ENCODE measurements at regions of chrX and their contacts with region 1.

Region 1: DNA sequence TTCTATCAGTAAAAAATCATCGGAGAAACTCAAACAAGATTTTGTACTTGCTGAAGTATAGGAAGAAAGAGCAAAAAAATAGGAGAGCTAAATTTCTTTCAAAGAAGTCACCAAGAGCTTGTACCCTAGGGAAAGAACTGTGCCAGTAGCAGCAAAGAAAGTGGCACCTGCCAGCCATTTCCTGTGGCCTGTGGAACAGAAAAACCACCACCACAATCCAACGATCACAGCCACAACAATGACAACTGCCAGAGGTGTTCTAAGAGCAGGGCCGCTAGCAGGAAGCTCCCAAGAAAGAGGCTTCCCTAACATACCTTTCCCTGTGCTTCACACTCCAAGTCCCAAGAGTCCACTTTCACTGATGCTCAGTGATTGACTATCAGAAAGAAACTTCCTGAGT is 266.1 kb upstream of the GPC4 start:
- DNase-seq: no peak
- H3K4me3 ChIP-seq: no peak overlapping the region
- H3K27ac ChIP-seq: no peak overlapping the region
- H3K4me1 ChIP-seq: no peaks in the 10 kb centered on the region
- H3K27me3 ChIP-seq: peaks cover 0 to 59% of the 10 kb centered on the region in 2 donors
- CTCF ChIP-seq: no peak
- POLR2A ChIP-seq: no peak

Region 2: GRCh38 chrX:134836497-134836968 is 1155.1 kb after region 1 on chrX:
- intact Hi-C with region 1: loop called (anchors 5 kb)
- DNase-seq: no peak
- H3K4me3 ChIP-seq: no peak overlapping the region
- H3K27ac ChIP-seq: no peak overlapping the region
- H3K4me1 ChIP-seq: no peaks in the 10 kb centered on the region
- H3K27me3 ChIP-seq: peaks cover 0 to 3% of the 10 kb centered on the region in 2 donors
- CTCF ChIP-seq: no peak
- POLR2A ChIP-seq: no peak

Measured in breast epithelium (tissue), 4 donors.